Naive thymus-derived CD4-positive, alpha-beta T cell (primary cell): ENCODE measurements at regions of chr11 and their contacts with region 1.

Region 1: DNA sequence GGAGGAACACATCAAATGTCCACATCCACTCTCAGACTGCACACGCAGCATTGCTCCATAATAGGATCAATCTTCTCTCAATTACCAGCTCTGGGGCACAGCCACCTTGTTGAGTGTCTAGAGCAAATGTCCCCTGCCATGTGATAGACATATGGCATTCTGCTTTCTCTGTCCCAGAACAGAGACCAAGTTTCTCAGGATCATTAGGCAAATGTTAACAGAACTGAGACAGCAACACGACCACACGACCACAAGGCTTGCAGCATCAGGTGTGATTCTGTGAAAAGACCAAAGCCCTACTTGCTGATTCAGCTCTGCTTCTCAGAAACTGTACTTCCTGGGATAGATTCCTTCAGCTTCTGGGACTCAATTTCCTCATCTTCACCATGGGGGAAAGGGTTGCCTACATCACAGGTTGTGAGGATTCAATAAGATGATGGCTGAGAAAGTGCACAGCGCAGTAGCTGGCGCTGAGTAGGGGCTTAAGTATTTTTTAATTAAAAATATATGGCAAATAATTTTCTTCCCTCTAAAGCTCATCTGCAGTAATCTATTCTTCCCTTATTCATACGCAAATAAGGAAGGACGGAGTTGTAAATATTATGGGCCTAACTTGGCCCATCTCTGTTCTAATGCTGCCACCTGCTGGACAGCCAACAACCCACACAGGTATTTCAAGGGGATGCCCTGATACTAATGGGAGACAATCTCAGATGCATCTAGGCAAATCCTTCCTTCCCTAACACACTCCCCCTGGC is 54.3 kb upstream of the USP47 start:
- DNase-seq: peak; percentile 34 to 69 (median 58)
- ATAC-seq: peak; percentile 88
- H3K4me3 ChIP-seq: no peak overlapping the region
- H3K4me3 Mint-ChIP-seq: no peak overlapping the region
- H3K27ac ChIP-seq: no peak overlapping the region
- H3K27ac Mint-ChIP-seq: no peak overlapping the region
- H3K4me1 ChIP-seq: no peaks in the 10 kb centered on the region
- H3K4me1 Mint-ChIP-seq: peaks cover 0 to 4% (median 0%) of the 10 kb centered on the region in 7 donors
- H3K27me3 ChIP-seq: peaks cover 0 to 4% of the 10 kb centered on the region in 2 donors
- H3K27me3 Mint-ChIP-seq: peaks cover 5 to 24% (median 9%) of the 10 kb centered on the region in 5 donors

Region 2: DNA sequence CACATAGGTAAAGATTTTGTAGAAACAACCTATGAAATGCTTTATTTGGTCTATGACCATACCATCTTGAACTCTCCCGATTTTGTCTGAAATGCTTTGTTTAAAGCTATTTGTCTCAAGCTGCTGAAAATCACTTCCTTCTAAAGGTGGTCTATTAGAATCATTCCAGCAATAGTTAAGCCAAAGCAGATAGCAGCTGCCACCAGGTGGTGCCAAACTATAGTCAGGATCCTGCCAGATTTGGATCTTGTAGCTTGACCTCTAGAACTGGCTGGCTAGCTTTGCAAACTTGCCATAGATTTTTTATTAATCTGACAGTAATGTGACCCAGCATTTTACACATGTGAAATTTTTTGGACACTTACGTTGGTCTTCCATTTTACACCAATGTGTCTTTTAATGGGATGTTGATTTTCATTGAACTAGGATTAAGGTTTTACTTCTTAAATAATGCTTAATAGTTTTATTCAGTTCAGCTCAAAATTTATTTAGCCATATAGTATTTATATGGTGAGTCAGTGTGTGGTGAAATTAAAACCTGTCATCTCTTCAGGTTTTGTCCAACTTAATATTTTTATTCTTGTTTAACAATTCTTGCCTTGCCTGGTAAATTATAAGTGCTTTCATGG is 1016.7 kb before region 1 on chr11:
- CTCF ChIA-PET with region 1: interaction called, 6 read pairs
- POLR2A ChIA-PET with region 1: no interaction called
- intact Hi-C with region 1: loop called in 1 of 2 experiments (anchors 1 kb)
- DNase-seq: no peak
- ATAC-seq: no peak
- H3K4me3 ChIP-seq: no peak overlapping the region
- H3K4me3 Mint-ChIP-seq: no peak overlapping the region
- H3K27ac ChIP-seq: no peak overlapping the region
- H3K27ac Mint-ChIP-seq: peak overlapping the region in 1 of 9 donors; percentile 48
- H3K4me1 ChIP-seq: no peaks in the 10 kb centered on the region
- H3K4me1 Mint-ChIP-seq: peaks cover 0 to 4% (median 0%) of the 10 kb centered on the region in 7 donors
- H3K27me3 ChIP-seq: no peaks in the 10 kb centered on the region
- H3K27me3 Mint-ChIP-seq: no peaks in the 10 kb centered on the region

Region 3: DNA sequence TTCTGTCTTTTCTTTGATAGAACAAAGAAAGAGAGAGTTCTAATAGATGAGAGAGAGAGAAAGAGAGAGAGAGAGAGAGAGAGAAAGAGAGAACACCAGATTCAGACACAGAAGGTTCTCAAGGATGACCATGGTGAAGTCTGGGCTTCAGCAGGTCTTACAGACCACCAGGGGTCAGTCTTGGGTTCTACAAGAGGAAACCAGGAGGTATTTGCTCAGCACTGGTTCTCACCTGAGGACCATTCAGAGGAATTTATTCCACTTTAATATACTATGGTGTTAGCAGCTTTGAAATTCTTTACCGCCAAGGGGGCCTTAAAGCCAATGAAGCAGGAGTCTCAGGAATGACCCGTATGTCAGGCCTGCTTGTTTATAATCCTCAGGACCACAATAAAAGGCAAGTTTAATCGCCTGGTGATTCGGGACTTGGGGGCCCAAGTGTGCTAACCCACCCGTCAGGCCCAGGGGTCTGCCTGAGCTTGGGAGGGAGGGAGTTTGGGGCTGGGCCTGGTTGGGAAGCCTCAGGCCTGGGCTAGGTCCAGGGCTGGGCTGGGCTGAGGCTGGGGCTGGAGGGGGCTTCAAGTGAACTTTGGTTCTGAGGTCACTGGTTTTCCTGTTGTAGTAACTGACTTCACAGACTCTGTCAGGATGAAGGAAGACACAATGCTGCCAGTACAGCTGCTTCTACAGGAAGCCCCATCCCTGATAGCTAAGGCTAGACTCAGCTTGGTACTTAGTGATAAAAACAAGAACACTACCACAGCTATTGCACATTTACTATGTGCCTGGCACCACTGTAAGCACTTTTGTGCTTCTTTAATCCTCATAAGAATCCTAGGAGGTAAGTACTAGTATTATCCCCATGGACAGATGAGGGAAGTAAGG is 750.4 kb before region 1 on chr11:
- CTCF ChIA-PET with region 1: interaction called, 6 read pairs
- POLR2A ChIA-PET with region 1: interaction called, 4 read pairs
- intact Hi-C with region 1: loop called (anchors 1 to 2 kb)
- DNase-seq: peak in 7 of 9 donors; percentile 33 to 63 (median 56)
- ATAC-seq: peak; percentile 86
- H3K4me3 ChIP-seq: no peak overlapping the region
- H3K4me3 Mint-ChIP-seq: peak overlapping the region in 5 of 10 donors; percentile 2 to 46 (median 8)
- H3K27ac ChIP-seq: no peak overlapping the region
- H3K27ac Mint-ChIP-seq: peak overlapping the region in 8 of 9 donors; percentile 50 to 93 (median 64)
- H3K4me1 ChIP-seq: peaks cover 0 to 15% of the 10 kb centered on the region in 2 donors
- H3K4me1 Mint-ChIP-seq: peaks cover 0 to 38% (median 25%) of the 10 kb centered on the region in 7 donors
- H3K27me3 ChIP-seq: no peaks in the 10 kb centered on the region
- H3K27me3 Mint-ChIP-seq: peaks cover 0 to 5% (median 0%) of the 10 kb centered on the region in 5 donors

Region 4: DNA sequence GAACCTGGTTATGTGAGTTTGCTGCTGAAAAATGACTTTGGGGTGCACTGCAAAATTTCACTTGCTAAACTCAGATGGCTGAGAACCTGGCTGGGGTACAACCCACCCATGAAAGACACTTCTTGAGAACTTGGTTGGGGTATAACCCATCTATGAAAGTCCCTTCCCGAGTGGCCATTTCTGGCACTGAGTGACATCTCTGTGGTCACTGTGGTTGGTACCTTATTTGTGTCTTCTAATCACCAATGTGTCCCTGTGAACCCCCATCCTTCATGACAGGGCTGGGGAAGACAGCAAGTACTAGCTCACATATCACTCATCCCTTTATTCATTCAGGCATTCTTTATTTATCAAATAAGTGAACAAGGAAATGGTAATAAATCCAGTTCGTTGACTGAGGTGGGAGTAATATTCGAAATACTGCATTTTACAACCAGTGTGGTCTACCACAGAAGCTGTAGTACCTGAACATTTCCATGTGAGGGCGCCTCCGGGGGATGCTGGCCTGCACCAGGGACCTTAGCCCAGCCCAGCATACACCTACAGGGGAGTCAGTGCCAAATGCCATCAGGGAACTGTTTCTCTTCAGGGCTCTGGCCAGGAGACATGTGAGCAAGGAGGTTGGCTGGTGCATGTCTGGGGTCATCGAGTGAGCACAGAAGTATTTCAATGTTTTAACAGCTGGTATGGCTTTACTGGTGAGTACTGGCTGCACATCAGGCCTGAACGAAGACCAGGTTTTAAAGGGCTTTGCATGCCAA is 556.5 kb before region 1 on chr11:
- CTCF ChIA-PET with region 1: no interaction called
- POLR2A ChIA-PET with region 1: no interaction called
- intact Hi-C with region 1: loop called in 1 of 2 experiments (anchors 10 kb)
- DNase-seq: no peak
- ATAC-seq: no peak
- H3K4me3 ChIP-seq: no peak overlapping the region
- H3K4me3 Mint-ChIP-seq: no peak overlapping the region
- H3K27ac ChIP-seq: no peak overlapping the region
- H3K27ac Mint-ChIP-seq: peak overlapping the region in 1 of 9 donors; percentile 32
- H3K4me1 ChIP-seq: no peaks in the 10 kb centered on the region
- H3K4me1 Mint-ChIP-seq: peaks cover 0 to 2% (median 0%) of the 10 kb centered on the region in 7 donors
- H3K27me3 ChIP-seq: no peaks in the 10 kb centered on the region
- H3K27me3 Mint-ChIP-seq: peaks cover 0 to 14% (median 5%) of the 10 kb centered on the region in 5 donors

Region 5: DNA sequence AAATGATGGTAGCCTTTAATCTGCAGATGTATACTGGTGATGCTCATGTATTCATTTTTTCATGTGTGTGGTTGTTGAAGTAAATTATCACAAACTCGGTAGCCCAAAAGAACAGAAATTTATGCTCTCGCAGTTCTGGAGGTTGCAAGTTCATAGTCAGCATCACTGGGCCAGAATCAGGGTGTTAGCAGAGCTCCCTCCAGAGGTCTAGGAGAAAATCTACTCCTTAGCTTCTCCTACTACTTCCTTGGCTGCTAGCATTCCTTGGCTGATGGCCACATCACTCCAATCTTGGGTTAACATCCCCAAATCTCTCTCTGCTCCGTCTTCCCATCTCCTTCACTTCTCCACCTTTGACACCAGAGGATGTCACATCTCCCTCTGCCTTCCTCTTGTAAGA is 120.4 kb before region 1 on chr11:
- CTCF ChIA-PET with region 1: no interaction called
- POLR2A ChIA-PET with region 1: no interaction called
- intact Hi-C with region 1: no loop called
- DNase-seq: no peak
- ATAC-seq: no peak
- H3K4me3 ChIP-seq: no peak overlapping the region
- H3K4me3 Mint-ChIP-seq: no peak overlapping the region
- H3K27ac ChIP-seq: no peak overlapping the region
- H3K27ac Mint-ChIP-seq: no peak overlapping the region
- H3K4me1 ChIP-seq: no peaks in the 10 kb centered on the region
- H3K4me1 Mint-ChIP-seq: no peaks in the 10 kb centered on the region
- H3K27me3 ChIP-seq: no peaks in the 10 kb centered on the region
- H3K27me3 Mint-ChIP-seq: peaks cover 19 to 48% (median 36%) of the 10 kb centered on the region in 5 donors

Region 6: GRCh38 chr11:12043959-12044819 is 256.7 kb after region 1 on chr11:
- CTCF ChIA-PET with region 1: no interaction called
- POLR2A ChIA-PET with region 1: no interaction called
- intact Hi-C with region 1: loop called in 1 of 2 experiments (anchors 2 kb)
- DNase-seq: peak; percentile 17 to 64 (median 44)
- ATAC-seq: peak; percentile 74
- H3K4me3 ChIP-seq: no peak overlapping the region
- H3K4me3 Mint-ChIP-seq: no peak overlapping the region
- H3K27ac ChIP-seq: no peak overlapping the region
- H3K27ac Mint-ChIP-seq: peak overlapping the region in 1 of 9 donors; percentile 58
- H3K4me1 ChIP-seq: peaks cover 0 to 3% of the 10 kb centered on the region in 2 donors
- H3K4me1 Mint-ChIP-seq: peaks cover 0 to 9% (median 0%) of the 10 kb centered on the region in 7 donors
- H3K27me3 ChIP-seq: no peaks in the 10 kb centered on the region
- H3K27me3 Mint-ChIP-seq: peaks cover 0 to 7% (median 0%) of the 10 kb centered on the region in 5 donors